ENCODE measurements at regions of chr22 and their contacts with region 1.

Region 1: DNA sequence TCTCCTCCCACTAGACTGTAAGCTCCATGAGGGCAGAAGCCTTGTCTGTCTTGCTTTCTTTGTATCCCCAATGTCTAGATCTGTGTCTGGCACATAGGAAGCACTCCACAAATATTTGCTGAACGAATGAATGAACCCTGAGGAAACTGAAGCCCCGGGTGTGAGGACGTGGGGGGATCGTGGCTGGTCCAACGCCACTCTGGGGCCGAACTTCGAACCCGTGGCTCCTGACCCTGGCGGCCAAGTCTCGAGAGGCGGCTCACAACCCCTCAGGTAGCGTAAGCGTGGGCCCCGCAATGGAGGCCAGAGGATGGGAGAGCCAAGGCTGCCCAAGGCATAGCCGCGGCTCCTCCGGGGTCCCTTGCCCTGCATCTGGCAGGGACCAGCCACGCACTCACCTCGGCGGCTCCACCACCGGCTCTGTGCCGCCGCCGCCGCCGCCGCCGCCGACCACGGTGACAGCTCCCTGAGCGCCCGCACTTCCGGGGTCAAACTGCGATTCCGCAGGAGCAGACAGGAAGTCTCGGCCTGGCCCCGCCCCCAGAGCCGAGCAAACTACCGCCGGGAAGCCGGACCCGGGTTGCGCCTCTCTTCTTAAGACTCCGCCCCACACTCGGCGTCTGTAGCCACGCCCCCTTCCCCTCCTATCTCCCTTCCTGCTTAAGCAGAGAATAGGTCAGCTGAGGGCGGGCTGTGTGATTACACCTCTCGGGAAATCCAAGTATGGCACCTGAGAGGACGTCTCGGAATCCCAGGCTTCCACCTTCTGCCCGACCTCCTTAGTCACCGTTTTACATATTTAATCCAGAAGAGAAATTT is at the start of gene ASCC2:
- DNase-seq: peak; percentile 98
- H3K4me3 ChIP-seq: peak within 1 kb of the TSS; percentile 99
- H3K27ac ChIP-seq: peak within 1 kb of the TSS; percentile 14
- H3K4me1 ChIP-seq: peaks cover 19% of the 10 kb centered on the region
- CTCF ChIP-seq: no peak
- total RNA-seq, gene ASCC2: 40.2 and 44.1 TPM in 2 replicates

Region 2: GRCh38 chr22:29883045-29883774 is 45.2 kb after region 1 on chr22 and contains the start of gene MTMR3:
- CTCF ChIA-PET with region 1: no interaction called
- POLR2A ChIA-PET with region 1: interaction called, 4 read pairs
- intact Hi-C with region 1: loop called (anchors 2 kb)
- DNase-seq: peak; percentile 91
- H3K4me3 ChIP-seq: peak within 1 kb of the TSS; percentile 98
- H3K27ac ChIP-seq: peak within 1 kb of the TSS; percentile 52
- H3K4me1 ChIP-seq: peaks cover 5% of the 10 kb centered on the region
- CTCF ChIP-seq: peak; percentile 66
- total RNA-seq, gene MTMR3: 10.9 and 22.2 TPM in 2 replicates

Region 3: GRCh38 chr22:30027169-30027568 is 189.2 kb after region 1 on chr22:
- CTCF ChIA-PET with region 1: no interaction called
- POLR2A ChIA-PET with region 1: no interaction called
- intact Hi-C with region 1: no loop called
- DNase-seq: no peak
- H3K4me3 ChIP-seq: no peak overlapping the region
- H3K27ac ChIP-seq: no peak overlapping the region
- H3K4me1 ChIP-seq: no peaks in the 10 kb centered on the region
- CTCF ChIP-seq: no peak